PC-3 (cell line): ENCODE measurements at regions of chr10 and their contacts with region 1.

Region 1: DNA sequence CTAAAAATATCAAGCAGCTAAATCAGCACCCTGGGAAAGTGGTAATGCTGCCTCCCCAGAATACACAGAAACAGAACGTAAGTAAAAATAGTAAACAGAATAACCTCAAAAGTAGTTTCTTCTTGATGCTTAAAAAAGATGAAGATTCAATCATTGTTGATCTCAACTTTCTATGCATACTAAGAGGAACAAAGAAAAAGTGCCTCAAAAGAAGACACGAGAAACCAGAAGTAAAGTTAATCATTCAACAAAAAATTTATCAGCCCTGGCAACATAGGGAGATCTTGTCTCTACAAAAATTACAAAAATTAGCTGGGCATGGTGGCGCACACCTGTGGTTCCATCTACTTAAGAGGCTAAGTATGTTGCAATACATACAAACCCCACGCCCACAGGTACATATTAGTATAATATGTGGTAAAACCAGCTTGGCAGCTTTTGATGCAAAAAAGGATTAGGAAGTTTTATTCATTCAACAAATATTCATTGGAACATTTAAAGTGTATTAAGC is 153.7 kb downstream of the NRBF2 start:
- DNase-seq: peak; percentile 99
- ATAC-seq: peak; percentile 54
- H3K4me3 ChIP-seq: no peak overlapping the region
- H3K27ac ChIP-seq: no peak overlapping the region
- H3K4me1 ChIP-seq: peaks cover 6% of the 10 kb centered on the region
- H3K27me3 ChIP-seq: no peaks in the 10 kb centered on the region
- CTCF ChIP-seq: no peak

Region 2: GRCh38 chr10:62502995-62503613 is 783.7 kb before region 1 on chr10:
- CTCF ChIA-PET with region 1: no interaction called
- POLR2A ChIA-PET with region 1: interaction called, 15 read pairs
- intact Hi-C with region 1: no loop called
- DNase-seq: peak; percentile 59
- ATAC-seq: peak; percentile 18; the same call in 1 of the 2 replicates
- H3K4me3 ChIP-seq: no peak overlapping the region
- H3K27ac ChIP-seq: no peak overlapping the region
- H3K4me1 ChIP-seq: peaks cover 14% of the 10 kb centered on the region
- H3K27me3 ChIP-seq: peaks cover 4% of the 10 kb centered on the region; the same call in 1 of the 2 replicates
- CTCF ChIP-seq: no peak

Region 3: GRCh38 chr10:63318491-63318890 is 31.7 kb after region 1 on chr10:
- CTCF ChIA-PET with region 1: no interaction called
- POLR2A ChIA-PET with region 1: no interaction called
- intact Hi-C with region 1: no loop called
- DNase-seq: no peak
- ATAC-seq: no peak
- H3K4me3 ChIP-seq: no peak overlapping the region
- H3K27ac ChIP-seq: no peak overlapping the region
- H3K4me1 ChIP-seq: no peaks in the 10 kb centered on the region
- H3K27me3 ChIP-seq: no peaks in the 10 kb centered on the region
- CTCF ChIP-seq: no peak

Region 4: DNA sequence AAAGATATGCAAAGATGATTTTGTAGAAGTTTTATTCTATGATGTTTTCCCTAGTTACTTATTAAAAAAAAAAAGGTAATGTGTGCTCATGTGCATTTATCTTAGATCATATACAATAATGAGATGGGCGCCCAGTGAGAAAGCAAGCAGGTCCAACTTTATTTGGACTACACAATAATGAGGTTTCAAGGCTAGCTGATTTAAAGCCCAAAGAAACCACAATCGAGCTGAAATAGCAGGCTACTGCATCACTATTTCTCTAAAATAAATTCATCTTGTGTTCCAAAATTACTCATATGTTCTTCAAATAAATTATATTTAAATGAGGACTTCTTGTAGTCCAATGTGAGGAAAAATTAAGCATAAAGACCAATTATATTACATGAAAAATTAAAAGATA is 68.9 kb after region 1 on chr10:
- CTCF ChIA-PET with region 1: no interaction called
- POLR2A ChIA-PET with region 1: no interaction called
- intact Hi-C with region 1: loop called (anchors 5 kb)
- DNase-seq: no peak
- ATAC-seq: no peak
- H3K4me3 ChIP-seq: no peak overlapping the region
- H3K27ac ChIP-seq: no peak overlapping the region
- H3K4me1 ChIP-seq: no peaks in the 10 kb centered on the region
- H3K27me3 ChIP-seq: no peaks in the 10 kb centered on the region
- CTCF ChIP-seq: no peak